PC-9 (cell line): ENCODE measurements at regions of chr7 and their contacts with region 1.

Region 1: DNA sequence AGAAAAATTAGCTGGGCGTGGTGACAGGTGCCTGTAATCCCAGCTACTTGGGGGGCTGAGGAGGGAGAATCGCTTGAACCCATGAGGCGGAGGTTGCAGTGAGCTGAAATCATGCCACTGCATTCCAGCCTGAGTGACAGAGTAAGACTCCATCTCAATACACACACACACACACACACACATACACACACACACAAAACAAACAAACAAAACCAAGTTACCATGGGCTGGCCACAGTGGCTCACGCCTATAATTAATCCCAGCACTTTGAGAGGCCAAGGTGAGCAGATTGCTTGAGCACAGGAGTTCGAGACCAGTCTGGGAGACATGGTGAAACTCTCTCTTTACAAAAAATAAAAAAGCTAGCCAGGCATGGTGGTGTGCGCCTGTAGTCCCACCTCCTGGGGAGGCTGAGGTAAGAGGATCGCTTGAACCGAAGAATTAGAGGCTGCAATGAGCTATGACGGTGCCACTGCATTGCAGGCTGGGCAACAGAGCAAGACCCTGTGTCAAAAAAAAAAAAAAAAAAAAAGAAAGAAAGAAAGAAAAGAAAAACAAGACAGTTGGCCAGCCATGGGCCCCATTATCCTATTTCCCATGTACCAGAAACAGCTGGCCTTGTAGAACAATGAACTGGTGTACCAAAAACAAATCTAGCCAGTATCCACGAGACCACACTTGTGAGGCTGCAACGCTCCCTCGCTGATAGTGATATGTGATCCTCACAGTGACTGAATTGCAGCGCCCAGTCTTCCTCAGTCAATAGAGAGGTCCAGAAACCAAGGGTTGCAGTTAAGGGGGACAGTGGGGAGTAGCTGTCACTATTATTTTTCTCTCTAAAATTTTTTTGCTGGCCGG is 6.6 kb upstream of the AGFG2 start:
- DNase-seq: no peak
- H3K4me3 ChIP-seq: no peak overlapping the region
- H3K27ac ChIP-seq: no peak overlapping the region
- H3K4me1 ChIP-seq: no peaks in the 10 kb centered on the region
- H3K27me3 ChIP-seq: no peaks in the 10 kb centered on the region
- CTCF ChIP-seq: no peak

Region 2: DNA sequence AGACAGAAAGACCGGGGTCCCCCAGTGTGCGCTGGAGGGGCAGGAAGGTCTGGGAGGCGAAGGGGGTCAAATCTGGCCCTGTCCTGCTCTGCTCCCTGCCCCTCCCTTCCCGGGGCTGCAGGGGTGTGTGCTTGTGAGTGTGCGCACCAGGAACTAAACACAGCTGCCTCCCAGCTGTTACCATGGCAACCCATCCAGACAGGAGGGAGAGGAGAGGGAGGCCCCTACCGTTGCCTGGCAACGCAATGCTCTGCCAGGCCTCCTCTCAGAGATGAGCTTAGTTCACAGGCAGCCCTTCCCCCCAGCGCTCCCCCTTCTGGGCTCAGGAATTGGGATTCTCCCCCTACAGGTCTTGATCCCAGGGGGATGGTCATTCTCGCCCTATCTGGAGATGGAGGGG is 42.6 kb before region 1 on chr7:
- CTCF ChIA-PET with region 1: no interaction called
- POLR2A ChIA-PET with region 1: no interaction called
- intact Hi-C with region 1: no loop called
- DNase-seq: peak; percentile 40 to 63
- H3K4me3 ChIP-seq: no peak overlapping the region
- H3K27ac ChIP-seq: no peak overlapping the region
- H3K4me1 ChIP-seq: no peaks in the 10 kb centered on the region
- H3K27me3 ChIP-seq: no peaks in the 10 kb centered on the region
- CTCF ChIP-seq: no peak

Region 3: GRCh38 chr7:101308245-101309085 is 776.1 kb after region 1 on chr7:
- CTCF ChIA-PET with region 1: no interaction called
- POLR2A ChIA-PET with region 1: interaction called, 11 read pairs
- intact Hi-C with region 1: no loop called
- DNase-seq: peak; percentile 74 to 76
- H3K4me3 ChIP-seq: peak overlapping the region; percentile 95
- H3K27ac ChIP-seq: no peak overlapping the region
- H3K4me1 ChIP-seq: no peaks in the 10 kb centered on the region
- H3K27me3 ChIP-seq: no peaks in the 10 kb centered on the region
- CTCF ChIP-seq: no peak